ENCODE measurements at regions of chr11 and their contacts with region 1.

Region 1: GRCh38 chr11:96012086-96012824 is 88.3 kb upstream of the MTMR2 start:
- DNase-seq: peak in 1 of 2 donors; percentile 73
- H3K4me3 ChIP-seq: peak overlapping the region; percentile 22 to 55
- H3K27ac ChIP-seq: peak overlapping the region; percentile 62 to 69
- H3K4me1 ChIP-seq: peaks cover 0 to 7% of the 10 kb centered on the region in 2 donors
- H3K27me3 ChIP-seq: no peaks in the 10 kb centered on the region
- CTCF ChIP-seq: peak; percentile 38 to 70 (median 54)

Region 2: DNA sequence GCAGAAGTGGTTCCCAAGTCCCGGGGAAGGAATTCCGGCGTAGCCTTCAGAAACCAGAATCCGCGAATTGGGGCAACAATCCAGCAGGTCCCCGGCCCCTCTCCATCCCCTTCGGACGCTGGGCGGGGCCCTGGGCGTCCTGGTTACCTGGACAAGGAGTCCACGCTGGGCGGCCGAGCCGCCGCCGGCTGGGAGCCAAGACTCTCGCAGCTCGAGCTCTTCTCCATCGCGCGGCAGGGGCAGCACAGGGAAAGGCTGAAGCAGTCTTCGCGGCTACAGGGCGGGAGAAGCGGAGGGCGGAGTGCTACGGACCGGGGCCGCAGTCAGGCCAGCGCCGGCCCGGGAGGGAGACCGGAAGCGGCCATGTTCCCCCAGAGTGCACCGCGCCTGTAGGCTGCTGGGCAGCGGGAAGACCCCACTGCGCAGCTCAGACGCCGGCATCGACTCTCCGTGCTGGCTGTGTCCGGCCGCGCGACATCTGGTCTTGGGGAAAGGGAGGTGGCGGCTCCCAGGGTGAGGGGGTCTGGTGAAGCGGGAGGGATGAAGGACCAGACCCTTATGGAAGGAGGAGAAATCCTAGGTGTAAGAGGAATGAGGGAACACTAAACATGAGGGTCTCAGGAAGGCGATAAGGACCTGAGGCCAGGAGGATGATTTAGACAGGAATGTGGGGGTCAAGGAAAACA is 88.4 kb before region 1 on chr11 and contains the start of gene MTMR2:
- intact Hi-C with region 1: loop called (anchors 5 kb)
- DNase-seq: peak in 1 of 2 donors; percentile 88
- H3K4me3 ChIP-seq: peak within 1 kb of the TSS; percentile 86
- H3K27ac ChIP-seq: peak within 1 kb of the TSS; percentile 94 to 98
- H3K4me1 ChIP-seq: peaks cover 0 to 11% of the 10 kb centered on the region in 2 donors
- H3K27me3 ChIP-seq: no peaks in the 10 kb centered on the region
- CTCF ChIP-seq: no peak
- total RNA-seq, gene MTMR2: 14.7 TPM

Region 3: GRCh38 chr11:96001037-96001436 is 11.2 kb before region 1 on chr11:
- intact Hi-C with region 1: loop called (anchors 1 kb)
- DNase-seq: peak; percentile 65 to 96
- H3K4me3 ChIP-seq: peak overlapping the region in 1 of 2 donors; percentile 48
- H3K27ac ChIP-seq: peak overlapping the region; percentile 75 to 85
- H3K4me1 ChIP-seq: peaks cover 0 to 28% of the 10 kb centered on the region in 2 donors
- H3K27me3 ChIP-seq: no peaks in the 10 kb centered on the region
- CTCF ChIP-seq: no peak

Region 4: DNA sequence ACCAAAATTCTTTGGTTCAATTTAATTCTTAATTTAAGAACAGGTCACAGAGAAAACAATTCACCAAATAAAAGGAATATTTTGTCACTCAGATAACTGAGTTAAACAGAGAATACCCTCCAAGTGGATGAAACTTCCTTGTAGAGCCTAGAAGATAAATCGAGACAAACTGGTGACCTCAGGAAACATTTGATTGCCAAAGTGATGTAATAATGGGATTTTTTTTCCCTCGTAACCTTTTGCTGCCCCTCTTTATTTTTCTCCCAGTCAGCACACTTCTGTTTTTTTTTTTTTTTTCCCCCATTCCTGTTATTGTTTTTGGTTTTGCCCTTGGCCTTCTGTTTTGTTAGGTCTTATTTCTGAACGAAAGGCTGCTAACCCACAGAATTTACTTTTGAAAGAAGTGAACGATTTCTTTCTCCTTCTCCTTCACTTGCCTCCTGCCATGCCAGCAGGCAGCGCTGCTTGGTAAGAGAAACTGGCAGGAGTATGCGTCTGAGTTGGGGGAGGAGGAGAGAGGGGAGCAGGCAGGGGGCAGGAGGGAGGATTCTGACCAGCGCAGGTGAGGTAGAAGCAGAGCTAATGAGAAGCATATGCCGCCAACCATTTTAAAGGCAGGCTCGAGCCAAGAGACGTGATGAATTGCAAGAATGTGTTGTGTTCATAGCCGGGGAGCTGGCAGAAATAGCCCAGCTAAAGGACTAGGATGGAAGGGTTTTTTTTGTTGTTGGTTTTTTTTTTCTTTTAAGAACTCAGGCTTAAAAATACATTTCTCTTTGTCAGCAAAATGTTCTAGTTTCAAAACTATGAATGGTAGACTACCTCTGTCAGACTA is 33.6 kb after region 1 on chr11:
- intact Hi-C with region 1: loop called (anchors 2 kb)
- DNase-seq: peak; percentile 23 to 86
- H3K4me3 ChIP-seq: peak overlapping the region; percentile 37 to 51
- H3K27ac ChIP-seq: peak overlapping the region; percentile 73 to 90
- H3K4me1 ChIP-seq: peaks cover 0 to 25% of the 10 kb centered on the region in 2 donors
- H3K27me3 ChIP-seq: no peaks in the 10 kb centered on the region
- CTCF ChIP-seq: peak; percentile 32 to 72 (median 35)

Region 5: GRCh38 chr11:96112201-96113128 is 100.2 kb after region 1 on chr11:
- intact Hi-C with region 1: loop called (anchors 5 kb)
- DNase-seq: no peak
- H3K4me3 ChIP-seq: peak overlapping the region in 1 of 2 donors; percentile 26
- H3K27ac ChIP-seq: peak overlapping the region; percentile 81 to 89
- H3K4me1 ChIP-seq: peaks cover 7 to 16% of the 10 kb centered on the region in 2 donors
- H3K27me3 ChIP-seq: no peaks in the 10 kb centered on the region
- CTCF ChIP-seq: no peak

Measured in ascending aorta (tissue), 2 donors.